ENCODE measurements at regions of chr6 and their contacts with region 1.

Region 1: DNA sequence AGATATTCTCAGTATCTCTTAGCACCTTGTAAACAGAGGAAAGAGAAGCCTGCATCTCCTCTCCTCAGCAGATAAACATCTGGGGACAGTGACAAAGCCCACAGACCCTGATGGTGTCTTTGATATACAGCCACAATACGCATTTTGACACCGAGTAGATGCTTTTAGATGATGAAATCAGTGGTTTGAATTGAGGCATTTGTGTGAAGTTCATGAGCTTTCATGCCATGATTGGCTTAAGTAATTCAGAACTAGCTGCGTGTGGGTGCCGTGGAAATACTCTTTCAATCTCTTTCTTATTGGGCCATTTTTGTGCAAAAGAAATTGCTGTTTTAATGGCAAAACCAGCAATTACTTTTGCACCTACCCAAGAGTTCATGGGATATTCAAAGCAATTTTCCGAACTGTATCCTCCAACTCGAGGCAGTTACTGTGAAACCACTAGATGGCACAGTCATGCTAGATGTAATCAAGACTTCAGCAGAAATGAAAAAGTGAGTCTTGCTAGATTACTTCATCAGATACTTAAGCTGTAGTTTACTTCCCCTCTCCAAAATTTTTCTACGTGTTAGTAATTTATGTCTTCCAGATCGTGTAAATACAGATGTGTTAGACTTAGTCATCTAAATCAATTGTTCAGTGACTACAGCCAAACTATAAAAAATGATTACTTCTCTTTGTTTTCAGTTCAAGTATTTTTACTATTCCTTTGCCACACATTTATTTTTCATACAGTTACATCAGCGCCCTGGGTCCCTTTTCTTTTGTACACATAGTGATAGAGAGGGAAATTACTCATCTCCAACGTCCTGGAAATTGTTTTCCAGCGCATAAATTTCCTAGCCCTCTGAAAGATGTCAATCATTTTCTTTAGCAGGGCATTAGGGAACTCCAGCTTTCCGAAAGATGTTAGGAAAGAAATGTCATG is 49.4 kb downstream of the IYD start:
- DNase-seq: peak; percentile 79
- H3K4me3 ChIP-seq: peak overlapping the region; percentile 24 to 51 (median 27)
- H3K27ac ChIP-seq: peak overlapping the region; percentile 69
- H3K4me1 ChIP-seq: peaks cover 5% of the 10 kb centered on the region
- H3K27me3 ChIP-seq: no peaks in the 10 kb centered on the region
- CTCF ChIP-seq: peak; percentile 85 to 93

Region 2: GRCh38 chr6:150492507-150492906 is 74.3 kb after region 1 on chr6:
- CTCF ChIA-PET with region 1: no interaction called
- dilution Hi-C with region 1: no loop called
- in situ Hi-C with region 1: no loop called
- intact Hi-C with region 1: loop called (anchors 2 kb)
- DNase-seq: peak; percentile 98
- H3K4me3 ChIP-seq: peak overlapping the region in 1 of 3 experiments; percentile 5
- H3K27ac ChIP-seq: peak overlapping the region; percentile 92
- H3K4me1 ChIP-seq: peaks cover 39% of the 10 kb centered on the region
- H3K27me3 ChIP-seq: no peaks in the 10 kb centered on the region
- CTCF ChIP-seq: no peak

Region 3: GRCh38 chr6:150667977-150668716 is 250.0 kb after region 1 on chr6:
- CTCF ChIA-PET with region 1: no interaction called
- dilution Hi-C with region 1: no loop called
- in situ Hi-C with region 1: no loop called
- intact Hi-C with region 1: loop called (anchors 1 kb)
- DNase-seq: peak; percentile 93
- H3K4me3 ChIP-seq: no peak overlapping the region
- H3K27ac ChIP-seq: peak overlapping the region; percentile 80
- H3K4me1 ChIP-seq: peaks cover 16% of the 10 kb centered on the region
- H3K27me3 ChIP-seq: no peaks in the 10 kb centered on the region
- CTCF ChIP-seq: peak in 1 of 2 donors; percentile 51

Region 4: GRCh38 chr6:150720774-150721233 is 302.6 kb after region 1 on chr6:
- CTCF ChIA-PET with region 1: no interaction called
- dilution Hi-C with region 1: no loop called
- in situ Hi-C with region 1: no loop called
- intact Hi-C with region 1: loop called (anchors 2 kb)
- DNase-seq: peak; percentile 99
- H3K4me3 ChIP-seq: no peak overlapping the region
- H3K27ac ChIP-seq: peak overlapping the region; percentile 77
- H3K4me1 ChIP-seq: peaks cover 29% of the 10 kb centered on the region
- H3K27me3 ChIP-seq: no peaks in the 10 kb centered on the region
- CTCF ChIP-seq: peak; percentile 13 to 21

Region 5: DNA sequence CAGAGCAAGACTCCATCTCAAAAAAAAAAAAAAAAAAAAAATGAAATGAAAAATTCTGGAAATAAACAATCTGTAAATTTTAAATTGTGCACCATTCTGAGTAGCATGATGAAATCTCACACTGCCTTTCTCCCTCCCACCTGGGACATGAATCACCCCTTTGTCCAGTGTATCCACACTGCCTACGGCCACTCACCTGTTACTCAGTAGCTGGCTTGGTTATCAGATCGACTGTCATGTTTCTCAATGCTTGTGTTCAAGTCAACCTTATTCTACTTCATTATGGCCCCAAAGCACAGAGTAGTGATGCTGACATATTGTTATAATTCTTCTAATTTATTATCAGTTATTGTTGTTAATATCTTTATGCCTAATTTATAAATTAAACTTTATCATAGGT is 388.6 kb after region 1 on chr6:
- CTCF ChIA-PET with region 1: interaction called, 13 read pairs
- dilution Hi-C with region 1: no loop called
- in situ Hi-C with region 1: loop called (anchors 5 kb)
- intact Hi-C with region 1: no loop called
- DNase-seq: peak; percentile 74
- H3K4me3 ChIP-seq: no peak overlapping the region
- H3K27ac ChIP-seq: no peak overlapping the region
- H3K4me1 ChIP-seq: no peaks in the 10 kb centered on the region
- H3K27me3 ChIP-seq: no peaks in the 10 kb centered on the region
- CTCF ChIP-seq: no peak

Region 6: GRCh38 chr6:150865406-150866146 is 447.4 kb after region 1 on chr6 and contains the start of gene MTHFD1L:
- CTCF ChIA-PET with region 1: no interaction called
- dilution Hi-C with region 1: no loop called
- in situ Hi-C with region 1: no loop called
- intact Hi-C with region 1: loop called (anchors 1 kb)
- DNase-seq: peak; percentile 71
- H3K4me3 ChIP-seq: peak within 1 kb of the TSS; percentile 79 to 96 (median 89)
- H3K27ac ChIP-seq: peak within 1 kb of the TSS; percentile 87
- H3K4me1 ChIP-seq: peaks cover 12% of the 10 kb centered on the region
- H3K27me3 ChIP-seq: no peaks in the 10 kb centered on the region
- CTCF ChIP-seq: peak; percentile 34 to 64
- total RNA-seq, gene MTHFD1L: 56.7 to 77.7 TPM

Region 7: GRCh38 chr6:150934380-150934779 is 516.2 kb after region 1 on chr6:
- CTCF ChIA-PET with region 1: no interaction called
- dilution Hi-C with region 1: no loop called
- in situ Hi-C with region 1: no loop called
- intact Hi-C with region 1: no loop called
- DNase-seq: peak; percentile 53
- H3K4me3 ChIP-seq: no peak overlapping the region
- H3K27ac ChIP-seq: no peak overlapping the region
- H3K4me1 ChIP-seq: no peaks in the 10 kb centered on the region
- H3K27me3 ChIP-seq: no peaks in the 10 kb centered on the region
- CTCF ChIP-seq: no peak

Region 8: DNA sequence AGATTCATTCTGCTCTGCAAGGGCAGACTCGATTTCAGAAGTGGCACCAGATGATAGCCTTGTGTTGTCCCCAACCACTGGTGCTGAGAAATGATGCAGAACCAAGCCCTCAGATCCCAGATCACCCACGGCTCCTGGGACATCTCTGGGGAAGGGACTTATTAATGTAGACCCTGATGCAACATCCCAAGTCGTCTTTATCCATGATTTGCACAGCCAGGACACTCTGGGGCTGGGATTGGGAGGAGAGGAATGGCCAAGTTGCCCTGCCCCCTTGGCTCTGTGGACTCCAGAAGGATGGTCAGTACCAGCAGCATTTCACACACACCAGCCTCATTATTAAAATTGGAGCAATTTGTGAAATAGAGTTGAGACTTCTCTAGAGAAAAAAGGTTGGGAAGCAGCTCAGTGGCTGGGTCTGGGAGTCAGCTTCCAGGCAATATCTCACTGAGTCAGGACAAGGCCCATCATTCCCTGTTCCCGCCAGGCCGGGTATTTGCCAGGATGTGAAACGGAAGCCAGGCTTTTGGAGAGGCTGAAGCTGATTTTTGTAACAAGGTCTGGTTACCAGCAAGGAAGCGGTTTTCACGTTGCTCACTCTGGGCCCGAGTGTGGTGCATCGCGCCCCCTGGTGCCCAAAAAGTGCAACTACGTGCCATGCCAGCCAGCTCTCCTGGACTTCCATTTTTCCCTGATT is 905.8 kb after region 1 on chr6:
- CTCF ChIA-PET with region 1: no interaction called
- dilution Hi-C with region 1: no loop called
- in situ Hi-C with region 1: loop called in 1 of 2 experiments (anchors 25 kb)
- intact Hi-C with region 1: no loop called
- DNase-seq: peak; percentile 62
- H3K4me3 ChIP-seq: no peak overlapping the region
- H3K27ac ChIP-seq: no peak overlapping the region
- H3K4me1 ChIP-seq: peaks cover 22% of the 10 kb centered on the region
- H3K27me3 ChIP-seq: no peaks in the 10 kb centered on the region
- CTCF ChIP-seq: peak; percentile 95 to 98